MCF 10A (cell line): ENCODE measurements at regions of chr11 and their contacts with region 1.

Region 1: DNA sequence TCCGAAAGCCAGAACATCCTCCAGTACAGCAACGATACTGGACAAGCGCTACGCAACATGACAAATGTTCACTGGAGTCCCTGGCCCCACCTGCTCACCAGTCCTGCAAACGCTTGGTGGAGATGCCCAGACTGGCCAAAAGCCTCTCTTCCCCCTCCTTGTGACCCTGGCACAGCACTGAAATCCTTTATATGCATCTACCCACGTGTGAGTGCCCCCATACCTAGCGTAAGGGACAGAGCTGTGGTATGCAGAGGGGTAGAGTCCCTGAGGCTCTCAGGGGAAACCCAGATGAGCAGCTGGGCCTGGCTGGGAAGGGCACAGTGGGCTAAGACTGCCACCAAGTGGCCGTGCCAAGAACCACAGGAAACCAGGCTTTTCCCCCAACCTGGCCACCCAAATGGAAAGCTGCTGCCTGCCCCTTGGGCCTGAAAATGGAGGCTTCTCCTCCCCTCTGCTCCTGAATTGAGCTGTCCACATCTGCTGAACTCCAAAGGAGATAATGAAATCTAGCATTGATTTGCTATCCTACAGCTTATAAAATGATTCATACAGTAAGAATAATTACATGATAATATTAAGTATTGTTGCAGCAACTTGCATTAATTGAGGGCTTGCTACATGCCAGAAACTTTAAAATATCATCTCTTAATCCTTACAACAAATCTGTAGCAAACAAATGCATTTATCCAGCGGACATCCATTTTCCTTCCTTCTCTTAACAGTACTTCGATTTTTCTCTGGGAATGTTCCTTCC is 24.8 kb upstream of the TTC12 start:
- DNase-seq: peak; percentile 58
- H3K4me3 Mint-ChIP-seq: no peak overlapping the region
- H3K27ac Mint-ChIP-seq: no peak overlapping the region
- H3K4me1 Mint-ChIP-seq: no peaks in the 10 kb centered on the region
- H3K27me3 Mint-ChIP-seq: peaks cover 38% of the 10 kb centered on the region
- CTCF ChIP-seq: peak; percentile 99

Region 2: GRCh38 chr11:112289588-112290492 is 999.8 kb before region 1 on chr11:
- CTCF ChIA-PET with region 1: interaction called, 14 read pairs
- POLR2A ChIA-PET with region 1: no interaction called
- intact Hi-C with region 1: loop called (anchors 1 kb)
- DNase-seq: peak; percentile 59
- H3K4me3 Mint-ChIP-seq: peak overlapping the region; percentile 67
- H3K27ac Mint-ChIP-seq: no peak overlapping the region
- H3K4me1 Mint-ChIP-seq: peaks cover 16% of the 10 kb centered on the region
- H3K27me3 Mint-ChIP-seq: peaks cover 11% of the 10 kb centered on the region
- CTCF ChIP-seq: peak; percentile 96

Region 3: DNA sequence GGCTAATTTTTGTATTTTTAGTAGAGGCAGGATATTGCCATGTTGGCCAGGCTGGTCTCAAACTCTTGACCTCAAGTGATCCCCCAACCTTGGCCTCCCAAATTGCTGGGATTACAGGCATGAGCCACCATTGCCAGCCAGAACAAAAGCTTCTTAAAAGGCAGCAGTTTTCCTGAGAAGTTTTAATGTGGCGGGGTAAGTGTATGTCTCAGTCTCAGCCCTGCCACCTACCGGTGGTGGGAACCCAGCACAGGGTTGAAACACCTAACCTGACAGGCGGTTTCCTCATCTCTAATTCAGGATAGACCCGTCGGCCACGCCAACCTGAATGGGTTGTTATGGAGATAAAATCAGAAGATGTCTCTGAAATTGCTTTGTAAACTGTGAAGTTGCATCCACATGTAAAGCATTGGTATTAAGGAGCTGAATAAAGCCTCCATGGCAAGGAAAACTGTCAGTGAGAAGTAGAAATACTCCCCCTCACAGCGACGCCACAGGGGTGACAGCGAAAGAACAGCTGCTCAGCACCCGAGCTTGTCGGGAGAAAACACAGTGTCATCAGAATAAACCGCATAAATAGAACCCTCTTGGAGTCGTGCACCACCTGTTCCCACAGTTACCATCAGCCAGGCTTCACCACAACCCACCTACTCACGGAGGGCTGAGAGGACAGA is 494.3 kb before region 1 on chr11:
- CTCF ChIA-PET with region 1: interaction called, 61 read pairs
- POLR2A ChIA-PET with region 1: no interaction called
- intact Hi-C with region 1: loop called (anchors 1 kb)
- DNase-seq: peak; percentile 72
- H3K4me3 Mint-ChIP-seq: no peak overlapping the region
- H3K27ac Mint-ChIP-seq: no peak overlapping the region
- H3K4me1 Mint-ChIP-seq: no peaks in the 10 kb centered on the region
- H3K27me3 Mint-ChIP-seq: no peaks in the 10 kb centered on the region
- CTCF ChIP-seq: peak; percentile 77

Region 4: DNA sequence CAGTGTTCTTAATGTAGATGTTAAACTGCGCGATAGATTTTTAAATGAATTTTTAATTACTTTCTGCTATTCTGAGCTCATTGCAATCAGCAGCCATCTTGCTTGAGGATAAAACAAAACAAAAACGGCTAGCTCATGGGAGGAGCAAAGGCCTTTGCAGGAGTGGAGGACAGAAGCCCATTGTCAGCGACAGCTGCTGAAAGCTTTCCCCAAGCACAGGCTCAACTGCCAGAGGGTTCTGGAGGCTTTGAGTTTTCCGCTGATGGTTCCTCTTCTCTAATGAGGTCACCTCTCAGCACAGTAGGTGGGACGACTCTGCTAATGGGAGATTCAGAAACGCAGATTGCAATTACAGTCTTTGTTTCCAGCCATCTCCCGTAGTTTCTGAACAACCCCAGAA is 142.4 kb before region 1 on chr11:
- CTCF ChIA-PET with region 1: interaction called, 10 read pairs
- POLR2A ChIA-PET with region 1: no interaction called
- intact Hi-C with region 1: no loop called
- DNase-seq: no peak
- H3K4me3 Mint-ChIP-seq: no peak overlapping the region
- H3K27ac Mint-ChIP-seq: no peak overlapping the region
- H3K4me1 Mint-ChIP-seq: no peaks in the 10 kb centered on the region
- H3K27me3 Mint-ChIP-seq: peaks cover 34% of the 10 kb centered on the region
- CTCF ChIP-seq: no peak

Region 5: GRCh38 chr11:113305440-113306336 is 16.1 kb after region 1 on chr11:
- CTCF ChIA-PET with region 1: interaction called, 25 read pairs
- POLR2A ChIA-PET with region 1: no interaction called
- intact Hi-C with region 1: no loop called
- DNase-seq: peak; percentile 79
- H3K4me3 Mint-ChIP-seq: no peak overlapping the region
- H3K27ac Mint-ChIP-seq: no peak overlapping the region
- H3K4me1 Mint-ChIP-seq: peaks cover 5% of the 10 kb centered on the region
- H3K27me3 Mint-ChIP-seq: peaks cover 13% of the 10 kb centered on the region
- CTCF ChIP-seq: peak; percentile 98